ENCODE measurements at regions of chr9 and their contacts with region 1.

Region 1: GRCh38 chr9:2181792-2182191 is 166.6 kb downstream of the SMARCA2 start:
- DNase-seq: no peak
- CTCF ChIP-seq: peak; percentile 14

Region 2: DNA sequence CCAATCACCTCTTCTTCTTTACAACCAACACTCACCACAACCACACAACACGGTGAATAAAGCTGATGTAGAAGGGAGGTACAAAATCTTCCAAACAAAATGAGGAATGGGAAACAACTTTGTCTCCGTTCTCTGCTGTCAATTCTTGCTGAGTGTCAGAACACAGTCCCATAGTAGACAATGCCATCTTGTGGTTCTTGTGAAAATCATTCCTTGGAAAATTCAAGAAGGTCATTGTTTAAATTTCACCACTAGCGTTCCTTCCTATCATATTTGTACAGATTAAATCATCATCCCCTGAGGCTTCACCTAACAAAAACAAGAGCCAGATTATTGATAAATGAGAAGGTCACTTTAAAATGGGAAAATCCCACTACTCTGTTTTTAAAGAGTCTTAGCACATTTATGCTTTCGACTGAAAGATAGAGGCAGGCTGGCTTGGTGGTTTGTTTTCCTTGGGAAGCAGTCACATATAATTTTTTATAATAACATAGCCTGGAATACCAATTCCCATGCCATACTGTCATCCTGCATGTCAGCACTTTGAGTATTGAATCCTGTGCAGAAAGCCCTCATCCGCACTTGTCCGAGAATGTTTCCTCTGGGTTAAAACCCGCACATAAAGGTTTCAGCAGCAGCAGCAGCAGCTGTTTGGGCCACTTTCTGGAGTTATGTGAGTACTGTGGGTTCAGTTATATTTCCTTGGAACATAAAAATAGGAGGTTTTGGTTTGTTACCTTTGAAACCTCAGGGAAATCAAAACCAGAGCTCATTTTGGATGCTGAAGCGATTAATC is 561.7 kb before region 1 on chr9:
- CTCF ChIA-PET with region 1: no interaction called
- POLR2A ChIA-PET with region 1: no interaction called
- DNase-seq: no peak
- CTCF ChIP-seq: no peak

Region 3: DNA sequence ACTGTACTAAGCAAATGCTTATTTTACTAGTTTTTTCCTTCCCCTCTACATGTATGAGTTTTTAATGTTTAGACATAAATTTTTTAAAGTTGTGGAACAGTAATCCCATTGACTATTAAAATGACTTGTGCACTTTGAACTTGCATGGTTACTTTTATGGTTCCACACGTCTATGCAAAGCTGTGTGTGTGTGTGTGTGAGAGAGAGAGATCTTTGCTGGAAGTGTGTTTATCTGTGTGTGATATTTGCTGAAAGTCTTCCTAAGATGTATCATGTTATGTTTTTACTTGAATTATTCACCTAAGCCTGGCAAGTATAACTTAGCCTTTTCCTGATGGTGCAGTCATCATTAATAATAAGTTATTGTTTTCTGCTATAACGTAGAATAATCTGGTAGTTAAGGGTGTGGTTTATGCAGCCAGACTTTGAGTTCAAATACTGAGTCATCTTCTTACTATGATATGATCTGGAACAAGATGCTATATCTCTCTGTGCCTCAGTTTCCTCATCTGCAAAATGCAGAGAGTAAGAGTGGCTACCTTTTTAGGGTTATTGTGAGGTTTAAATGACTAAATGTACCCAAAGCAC is 28.1 kb before region 1 on chr9:
- CTCF ChIA-PET with region 1: interaction called, 14 read pairs
- POLR2A ChIA-PET with region 1: no interaction called
- DNase-seq: no peak
- CTCF ChIP-seq: no peak

Region 4: GRCh38 chr9:2166203-2166602 is 15.6 kb before region 1 on chr9:
- CTCF ChIA-PET with region 1: interaction called, 26 read pairs
- POLR2A ChIA-PET with region 1: no interaction called
- DNase-seq: no peak
- CTCF ChIP-seq: no peak

Region 5: DNA sequence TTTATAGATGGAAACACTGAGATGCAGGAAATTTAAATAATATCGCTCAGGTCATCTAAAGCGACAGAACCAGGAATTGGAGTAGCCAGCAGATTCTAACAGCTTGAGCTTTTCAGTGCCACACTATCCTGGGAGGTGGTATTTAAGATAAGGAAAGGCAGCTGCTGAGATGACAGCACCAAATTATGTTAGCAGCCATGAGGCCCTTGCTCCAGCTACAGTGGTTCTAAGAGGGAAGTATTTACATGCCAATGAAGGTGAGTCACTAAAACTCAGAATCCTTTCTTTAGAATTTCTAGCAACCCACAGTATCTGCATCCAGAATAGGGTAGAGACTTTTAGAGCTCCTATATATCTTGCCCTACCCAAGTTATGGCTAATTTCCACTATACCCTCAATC is 312.8 kb after region 1 on chr9:
- CTCF ChIA-PET with region 1: no interaction called
- POLR2A ChIA-PET with region 1: no interaction called
- DNase-seq: no peak
- CTCF ChIP-seq: no peak

Measured in GM10248 (cell line).